ENCODE measurements at regions of chr3 and their contacts with region 1.

Region 1: DNA sequence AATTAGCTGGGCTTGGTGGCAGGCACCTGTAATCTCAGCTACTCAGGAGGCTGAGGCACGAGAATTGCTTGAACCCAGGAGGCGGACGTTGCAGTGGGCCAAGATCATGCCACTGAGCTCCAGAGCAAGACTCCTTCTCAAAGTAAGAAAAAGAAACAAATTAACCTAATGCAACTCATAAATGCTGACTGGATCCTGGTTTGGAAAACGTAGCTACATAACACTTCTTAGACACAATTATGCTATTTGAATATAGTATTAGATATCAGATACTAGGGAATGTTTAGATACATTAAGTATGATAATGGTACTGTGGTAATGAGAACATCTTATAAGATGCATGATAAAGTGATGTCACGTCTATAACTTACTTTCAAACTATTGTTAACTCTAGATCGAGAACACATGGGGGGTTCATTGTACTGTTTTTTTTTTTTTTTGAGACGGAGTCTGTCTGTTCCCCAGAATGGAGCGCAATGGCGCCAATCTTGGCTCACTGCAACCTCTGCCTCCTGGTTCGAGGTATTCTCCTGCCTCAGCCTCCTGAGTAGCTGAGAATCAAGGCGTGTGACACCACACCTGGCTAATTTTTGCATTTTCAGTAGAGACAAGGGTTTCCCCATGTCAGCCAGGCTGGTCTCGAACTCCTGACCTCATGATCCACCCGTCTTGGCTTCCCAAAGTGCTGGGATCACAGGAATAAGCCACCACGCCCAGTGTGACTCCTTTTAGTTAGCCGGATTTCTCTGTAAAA is 5.9 kb upstream of the ISY1 start:
- DNase-seq: peak in 1 of 3 donors; percentile 21
- ATAC-seq: no peak
- H3K4me3 ChIP-seq: no peak overlapping the region
- H3K27ac ChIP-seq: no peak overlapping the region
- H3K4me1 ChIP-seq: peaks cover 0 to 14% (median 4%) of the 10 kb centered on the region in 4 donors
- H3K27me3 ChIP-seq: no peaks in the 10 kb centered on the region
- CTCF ChIP-seq: no peak
- POLR2A ChIP-seq: no peak

Region 2: DNA sequence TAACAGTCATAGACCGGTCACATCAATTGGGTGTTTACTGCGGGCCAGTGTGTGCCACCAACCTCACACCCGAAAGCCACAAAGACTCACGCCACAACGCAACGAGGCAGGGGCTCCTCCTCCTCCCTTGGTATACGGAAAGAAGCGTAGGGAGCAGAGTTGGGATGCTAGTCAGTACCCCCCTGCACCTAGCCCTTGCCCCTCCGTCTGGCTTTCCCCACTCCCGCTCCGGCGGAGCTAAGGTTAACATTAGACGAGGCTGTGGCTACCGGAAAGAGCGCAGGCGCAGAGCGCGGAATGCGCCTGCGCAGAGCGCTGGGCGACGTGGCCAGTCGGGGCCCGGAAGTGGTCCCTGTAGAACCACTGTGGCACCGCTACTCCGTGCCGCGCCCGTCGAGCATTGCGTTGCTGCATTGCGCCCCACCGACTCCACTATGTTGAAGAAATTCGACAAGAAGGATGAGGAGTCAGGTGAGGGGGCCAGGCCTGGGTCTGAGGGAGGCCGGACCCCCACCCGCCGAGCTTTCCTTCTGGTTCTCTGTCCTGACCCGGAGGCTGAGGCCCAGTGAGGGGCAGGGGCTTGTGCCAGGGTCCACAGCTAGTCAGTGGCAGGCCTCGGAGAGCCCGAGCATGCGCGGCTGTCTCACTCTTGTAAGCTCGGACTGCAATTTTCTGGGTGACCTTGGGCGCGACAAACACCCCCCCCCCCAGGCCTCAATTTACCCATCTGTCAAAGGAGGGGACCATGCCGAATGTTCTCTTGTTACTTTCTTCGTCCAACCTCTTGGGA is 82.7 kb after region 1 on chr3 and contains the start of gene COPG1:
- intact Hi-C with region 1: loop called in 1 of 2 experiments (anchors 5 kb)
- DNase-seq: peak; percentile 83 to 87 (median 86)
- ATAC-seq: peak; percentile 82 to 89 (median 86)
- H3K4me3 ChIP-seq: peak within 1 kb of the TSS; percentile 84 to 99 (median 96)
- H3K27ac ChIP-seq: peak within 1 kb of the TSS; percentile 83 to 94 (median 85)
- H3K4me1 ChIP-seq: peaks cover 0 to 24% (median 11%) of the 10 kb centered on the region in 4 donors
- H3K27me3 ChIP-seq: no peaks in the 10 kb centered on the region
- CTCF ChIP-seq: no peak
- POLR2A ChIP-seq: peak; percentile 95
- total RNA-seq, gene COPG1: 75.9 to 140 (median 119) TPM